ENCODE measurements at regions of chr1 and their contacts with region 1.

Region 1: GRCh38 chr1:202315576-202316168 is 26.1 kb downstream of the UBE2T start:
- DNase-seq: peak; percentile 66
- ATAC-seq: peak; percentile 98
- H3K4me3 ChIP-seq: no peak overlapping the region
- H3K27ac ChIP-seq: no peak overlapping the region
- H3K4me1 ChIP-seq: no peaks in the 10 kb centered on the region
- H3K27me3 ChIP-seq: peaks cover 52% of the 10 kb centered on the region
- CTCF ChIP-seq: peak; percentile 97
- POLR2A ChIP-seq: no peak
- RAD21 ChIP-seq: peak; percentile 98

Region 2: GRCh38 chr1:200610846-200611245 is 1704.8 kb before region 1 on chr1:
- CTCF ChIA-PET with region 1: no interaction called
- POLR2A ChIA-PET with region 1: no interaction called
- dilution Hi-C with region 1: no loop called
- in situ Hi-C with region 1: no loop called
- intact Hi-C with region 1: no loop called
- DNase-seq: peak; percentile 58
- ATAC-seq: peak; percentile 72
- H3K4me3 ChIP-seq: no peak overlapping the region
- H3K27ac ChIP-seq: no peak overlapping the region
- H3K4me1 ChIP-seq: no peaks in the 10 kb centered on the region
- H3K27me3 ChIP-seq: no peaks in the 10 kb centered on the region
- CTCF ChIP-seq: no peak
- POLR2A ChIP-seq: no peak
- RAD21 ChIP-seq: no peak

Region 3: DNA sequence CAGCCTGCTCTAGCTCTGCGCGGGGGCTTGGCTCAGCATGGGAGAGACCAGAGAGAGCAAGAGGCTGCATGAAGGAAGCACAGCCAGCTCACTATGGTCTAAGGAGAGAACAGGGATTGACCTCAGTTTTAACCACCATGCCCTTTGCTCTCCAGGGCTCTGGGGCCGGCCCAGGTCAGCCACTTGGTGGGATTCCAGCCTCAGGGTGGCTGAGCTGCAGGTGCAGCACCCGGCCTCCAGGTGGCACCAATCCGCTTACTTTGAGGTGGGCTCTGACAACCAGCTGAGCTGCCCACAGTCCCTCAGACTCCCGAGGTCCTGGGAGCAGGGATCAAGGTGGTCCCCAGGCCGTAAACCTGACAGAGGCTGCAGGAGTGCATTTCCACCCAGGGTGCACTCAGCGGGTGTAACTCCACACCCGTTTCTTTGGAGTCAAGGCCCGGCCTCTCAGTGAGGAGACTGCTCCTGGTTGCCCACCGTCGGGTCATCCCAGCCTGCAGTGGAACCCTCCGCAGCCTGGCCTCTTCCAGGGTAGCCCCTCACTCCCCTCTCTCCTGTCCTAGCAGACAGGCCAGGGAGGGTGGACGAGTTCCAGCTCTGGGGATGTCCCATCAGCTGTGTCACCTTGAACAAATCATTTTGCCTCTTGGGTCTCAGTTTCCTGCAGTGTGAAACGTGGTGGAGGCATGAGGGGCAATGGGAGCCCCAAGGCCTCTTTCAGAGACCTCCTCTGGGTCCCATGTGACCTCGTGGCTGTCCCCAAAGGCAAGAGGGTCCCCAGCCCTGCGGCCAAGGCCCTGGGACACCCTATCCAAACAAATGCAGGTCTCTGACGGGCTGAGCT is 122.7 kb before region 1 on chr1:
- CTCF ChIA-PET with region 1: interaction called, 18 read pairs
- POLR2A ChIA-PET with region 1: no interaction called
- dilution Hi-C with region 1: no loop called
- in situ Hi-C with region 1: no loop called
- intact Hi-C with region 1: loop called (anchors 1 kb)
- DNase-seq: peak; percentile 35
- ATAC-seq: peak; percentile 85
- H3K4me3 ChIP-seq: no peak overlapping the region
- H3K27ac ChIP-seq: no peak overlapping the region
- H3K4me1 ChIP-seq: no peaks in the 10 kb centered on the region
- H3K27me3 ChIP-seq: peaks cover 56% of the 10 kb centered on the region
- CTCF ChIP-seq: peak; percentile 81
- POLR2A ChIP-seq: no peak
- RAD21 ChIP-seq: peak; percentile 79

Region 4: DNA sequence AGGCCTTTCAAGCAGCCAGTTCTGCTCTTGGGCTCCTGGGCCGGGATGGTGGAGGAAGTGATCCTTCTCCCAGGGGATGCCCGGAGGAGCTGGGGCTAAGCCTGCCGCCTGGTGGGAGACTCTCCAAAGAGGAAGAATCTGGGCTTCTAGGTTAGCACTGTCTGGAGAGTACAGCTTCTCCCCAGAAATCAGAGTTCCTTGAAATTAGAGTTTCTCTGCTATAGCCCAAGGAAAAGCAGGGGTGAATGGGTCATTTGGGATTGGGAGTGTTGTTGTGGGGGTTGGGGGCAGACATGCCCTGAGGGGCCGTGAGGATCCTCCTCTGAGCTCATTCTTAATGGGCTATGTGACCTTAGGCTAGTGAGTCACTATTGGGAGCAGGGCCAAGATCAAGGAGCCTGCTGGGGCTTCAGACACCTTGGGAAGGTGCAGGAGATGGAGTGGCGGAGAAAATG is 115.5 kb before region 1 on chr1:
- CTCF ChIA-PET with region 1: no interaction called
- POLR2A ChIA-PET with region 1: no interaction called
- dilution Hi-C with region 1: no loop called
- in situ Hi-C with region 1: loop called (anchors 5 kb)
- intact Hi-C with region 1: no loop called
- DNase-seq: peak; percentile 6
- ATAC-seq: no peak
- H3K4me3 ChIP-seq: no peak overlapping the region
- H3K27ac ChIP-seq: no peak overlapping the region
- H3K4me1 ChIP-seq: no peaks in the 10 kb centered on the region
- H3K27me3 ChIP-seq: peaks cover 72% of the 10 kb centered on the region
- CTCF ChIP-seq: no peak
- POLR2A ChIP-seq: no peak
- RAD21 ChIP-seq: no peak

Region 5: DNA sequence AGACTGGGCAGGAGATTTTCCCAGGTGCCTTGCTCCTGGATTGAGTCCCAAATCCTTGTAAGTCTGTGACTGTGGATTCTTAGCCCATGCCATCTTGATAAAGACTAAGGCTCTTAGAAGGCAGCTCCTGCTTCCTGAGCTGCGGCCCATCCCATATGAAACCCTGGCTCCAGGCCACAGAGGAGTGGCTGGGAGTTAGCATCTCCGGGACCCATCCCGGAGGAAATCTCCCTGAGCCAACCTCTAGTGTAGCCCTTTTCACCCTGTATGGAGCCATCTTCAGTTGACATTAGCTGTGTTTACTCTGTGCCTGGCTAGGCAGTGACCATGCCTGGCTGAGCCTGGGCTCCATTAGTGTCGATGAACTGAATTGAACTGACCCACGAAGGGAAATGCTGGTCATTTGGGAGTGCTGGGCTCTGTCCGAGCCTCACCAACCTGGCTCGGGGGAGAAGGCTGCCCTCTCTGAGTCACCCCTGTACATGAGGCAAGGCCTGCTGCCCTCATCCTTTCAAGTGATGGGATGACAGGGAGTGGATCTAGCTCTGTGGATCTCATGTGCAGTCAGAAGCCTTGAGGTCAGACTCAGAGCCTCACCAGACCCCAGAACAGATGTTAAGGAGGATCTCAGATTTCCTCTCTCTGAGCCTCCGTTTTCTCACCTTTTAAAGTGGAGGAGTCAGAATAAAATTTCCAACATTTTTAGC is 84.6 kb before region 1 on chr1:
- CTCF ChIA-PET with region 1: no interaction called
- POLR2A ChIA-PET with region 1: no interaction called
- dilution Hi-C with region 1: no loop called
- in situ Hi-C with region 1: no loop called
- intact Hi-C with region 1: no loop called
- DNase-seq: no peak
- ATAC-seq: no peak
- H3K4me3 ChIP-seq: no peak overlapping the region
- H3K27ac ChIP-seq: no peak overlapping the region
- H3K4me1 ChIP-seq: peaks cover 7% of the 10 kb centered on the region
- H3K27me3 ChIP-seq: peaks cover 36% of the 10 kb centered on the region
- CTCF ChIP-seq: no peak
- POLR2A ChIP-seq: no peak
- RAD21 ChIP-seq: no peak

Region 6: GRCh38 chr1:202274611-202275010 is 41.1 kb before region 1 on chr1:
- CTCF ChIA-PET with region 1: interaction called, 6 read pairs
- POLR2A ChIA-PET with region 1: no interaction called
- dilution Hi-C with region 1: no loop called
- in situ Hi-C with region 1: no loop called
- intact Hi-C with region 1: loop called (anchors 1 kb)
- DNase-seq: peak; percentile 12
- ATAC-seq: no peak; the same call in 1 of the 2 replicates
- H3K4me3 ChIP-seq: no peak overlapping the region
- H3K27ac ChIP-seq: no peak overlapping the region
- H3K4me1 ChIP-seq: no peaks in the 10 kb centered on the region
- H3K27me3 ChIP-seq: peaks cover 29% of the 10 kb centered on the region
- CTCF ChIP-seq: peak; percentile 44
- POLR2A ChIP-seq: no peak
- RAD21 ChIP-seq: peak; percentile 60

Region 7: GRCh38 chr1:203326830-203327683 is 1011.4 kb after region 1 on chr1:
- CTCF ChIA-PET with region 1: no interaction called
- POLR2A ChIA-PET with region 1: no interaction called
- dilution Hi-C with region 1: no loop called
- in situ Hi-C with region 1: no loop called
- intact Hi-C with region 1: no loop called
- DNase-seq: peak; percentile 79
- ATAC-seq: peak; percentile 97
- H3K4me3 ChIP-seq: peak overlapping the region; percentile 56
- H3K27ac ChIP-seq: no peak overlapping the region
- H3K4me1 ChIP-seq: peaks cover 4% of the 10 kb centered on the region; the same call in 1 of the 2 replicates
- H3K27me3 ChIP-seq: peaks cover 56% of the 10 kb centered on the region
- CTCF ChIP-seq: no peak
- POLR2A ChIP-seq: no peak
- RAD21 ChIP-seq: no peak